ENCODE measurements at regions of chr1 and their contacts with region 1.

Region 1: GRCh38 chr1:39816415-39817090 is 27.9 kb upstream of the BMP8B start:
- DNase-seq: no peak

Region 2: DNA sequence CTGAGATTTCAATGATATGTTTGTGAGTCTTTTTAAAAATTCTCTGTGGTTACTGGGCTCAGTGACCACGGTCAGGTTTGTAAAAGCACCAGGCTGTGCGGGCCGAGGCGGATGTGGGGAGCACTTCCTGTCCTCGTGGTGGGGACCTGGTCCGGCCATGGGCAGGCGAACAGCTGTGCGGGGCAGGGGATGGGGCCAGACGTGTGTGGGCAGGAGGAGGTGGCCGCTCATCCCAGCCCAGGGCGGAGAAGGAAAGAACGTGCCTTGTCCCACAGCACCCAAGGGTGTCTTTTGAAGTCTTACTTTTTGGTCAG is 40.2 kb before region 1 on chr1:
- intact Hi-C with region 1: no loop called
- DNase-seq: peak; percentile 57

Region 3: GRCh38 chr1:39901698-39902459 is 85.3 kb after region 1 on chr1 and contains the start of gene MYCL:
- intact Hi-C with region 1: loop called (anchors 2 kb)
- DNase-seq: peak; percentile 88
- total RNA-seq, gene MYCL: 0.35 TPM

Region 4: DNA sequence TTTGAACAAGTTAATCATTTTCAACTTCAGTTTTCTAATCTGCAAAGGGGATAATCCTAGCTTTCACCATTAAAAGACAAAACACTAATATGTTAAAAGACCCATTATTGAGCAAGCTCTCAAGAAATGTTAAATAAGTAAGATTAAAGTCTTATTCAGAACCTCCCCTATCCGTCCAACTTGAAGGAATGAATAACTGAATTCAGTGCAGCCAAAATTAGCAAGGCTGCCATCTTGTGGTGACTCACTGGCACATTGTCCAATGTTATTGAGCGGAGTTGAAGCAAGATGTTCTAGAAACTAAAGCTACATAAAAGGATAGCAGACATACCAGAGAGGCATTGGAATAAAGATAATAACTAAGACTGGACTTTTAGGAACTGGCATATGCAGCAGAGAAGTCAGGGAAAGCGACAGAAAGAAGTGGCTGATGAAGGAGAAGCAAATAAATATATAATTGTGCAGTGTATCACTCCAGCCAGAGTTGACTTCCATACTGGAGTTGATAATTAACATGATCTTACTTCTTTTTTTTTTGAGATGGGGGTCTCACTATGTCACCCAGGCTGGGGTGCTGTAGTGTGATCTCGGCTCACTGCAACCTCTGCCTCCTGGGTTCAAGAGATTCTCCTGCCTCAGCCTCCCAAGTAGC is 215.8 kb after region 1 on chr1:
- intact Hi-C with region 1: loop called (anchors 5 kb)
- DNase-seq: no peak

Measured in cardiac septum (tissue), 1 donor.